Prostate gland (tissue), 2 donors: ENCODE measurements at regions of chr3 and their contacts with region 1.

Region 1: DNA sequence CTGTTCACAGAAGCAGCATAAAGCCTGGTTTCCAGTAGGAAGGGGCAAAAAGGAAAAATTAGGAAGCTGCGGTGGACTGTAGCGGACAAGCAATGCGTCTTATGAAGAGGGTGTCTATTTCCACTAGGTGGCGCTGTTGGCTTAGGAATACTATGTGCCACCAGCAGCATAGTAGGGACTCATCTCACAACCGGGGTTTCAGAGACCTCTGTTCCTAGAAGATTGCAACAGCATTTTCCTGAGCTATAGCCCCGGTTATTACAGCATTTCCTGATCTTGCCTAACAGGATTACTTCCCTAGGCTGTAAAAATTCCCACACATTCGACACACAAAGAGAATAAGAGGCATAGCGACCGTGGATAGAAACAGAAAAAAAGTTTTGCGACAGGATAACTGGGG is 683.0 kb downstream of the TBL1XR1 start:
- DNase-seq: peak; percentile 17
- H3K4me3 ChIP-seq: no peak overlapping the region
- H3K27ac ChIP-seq: no peak overlapping the region
- H3K4me1 ChIP-seq: no peaks in the 10 kb centered on the region
- H3K27me3 ChIP-seq: no peaks in the 10 kb centered on the region
- CTCF ChIP-seq: peak; percentile 22 to 83 (median 42)
- POLR2A ChIP-seq: no peak

Region 2: GRCh38 chr3:176939022-176939817 is 424.9 kb after region 1 on chr3:
- intact Hi-C with region 1: loop called (anchors 5 kb)
- DNase-seq: peak; percentile 43
- H3K4me3 ChIP-seq: no peak overlapping the region
- H3K27ac ChIP-seq: no peak overlapping the region
- H3K4me1 ChIP-seq: no peaks in the 10 kb centered on the region
- H3K27me3 ChIP-seq: no peaks in the 10 kb centered on the region
- CTCF ChIP-seq: peak in 3 of 4 experiments; percentile 67 to 74 (median 73)
- POLR2A ChIP-seq: no peak